ENCODE measurements at regions of chr21 and their contacts with region 1.

Region 1: GRCh38 chr21:36976882-36977651 is 10.6 kb upstream of the HLCS start:
- DNase-seq: peak; percentile 66
- ATAC-seq: peak; percentile 77
- H3K4me3 Mint-ChIP-seq: peak overlapping the region; percentile 34
- H3K27ac Mint-ChIP-seq: peak overlapping the region; percentile 70
- H3K4me1 Mint-ChIP-seq: peaks cover 25% of the 10 kb centered on the region
- H3K27me3 Mint-ChIP-seq: peaks cover 9% of the 10 kb centered on the region

Region 2: DNA sequence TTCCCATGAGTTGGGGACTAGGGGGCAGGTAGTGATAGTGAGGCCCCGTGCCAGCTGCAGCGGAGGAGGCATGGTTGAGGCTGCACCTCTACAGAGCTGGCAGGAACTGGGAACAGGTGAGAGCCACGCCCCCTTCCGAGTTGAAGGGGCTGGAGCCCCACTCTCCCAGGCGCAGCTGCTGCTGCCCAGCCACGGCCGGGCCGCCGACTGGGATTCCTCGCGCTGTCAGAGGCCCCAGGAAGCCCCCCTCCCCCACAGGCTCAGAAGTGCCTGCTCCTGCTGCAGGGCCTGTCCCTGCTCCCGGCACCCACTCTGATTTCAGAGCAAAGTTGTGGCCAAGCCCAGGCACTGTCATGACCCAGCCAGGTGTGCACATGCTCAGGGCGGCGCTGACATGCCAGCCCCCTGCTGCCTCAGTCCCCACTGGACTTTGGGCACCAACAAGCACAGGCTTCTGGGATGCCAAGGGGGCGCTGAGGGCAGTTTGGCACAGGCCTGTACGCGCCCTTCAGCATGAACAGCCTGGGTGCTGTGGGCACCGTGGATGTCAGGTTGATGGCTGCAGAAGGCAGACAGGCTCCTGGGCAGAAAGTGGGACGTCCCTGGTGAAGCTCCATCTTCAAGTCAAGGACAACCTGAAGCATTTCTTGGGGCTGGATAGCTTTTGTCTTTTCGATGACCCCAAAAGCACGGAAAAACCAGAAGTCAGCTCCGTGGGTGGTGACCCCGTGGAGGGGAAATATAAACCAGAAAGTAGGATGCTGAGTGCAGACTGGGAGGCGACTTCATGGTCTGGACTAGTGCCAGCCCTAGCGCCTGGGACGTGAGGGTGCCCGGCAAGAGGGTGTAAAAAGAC is 156.7 kb before region 1 on chr21:
- CTCF ChIA-PET with region 1: no interaction called
- DNase-seq: no peak
- ATAC-seq: no peak
- H3K4me3 Mint-ChIP-seq: no peak overlapping the region
- H3K27ac Mint-ChIP-seq: no peak overlapping the region
- H3K4me1 Mint-ChIP-seq: no peaks in the 10 kb centered on the region
- H3K27me3 Mint-ChIP-seq: no peaks in the 10 kb centered on the region

Region 3: GRCh38 chr21:36966066-36966820 is 10.8 kb before region 1 on chr21 and contains the start of gene HLCS:
- CTCF ChIA-PET with region 1: interaction called, 22 read pairs
- DNase-seq: peak; percentile 83
- ATAC-seq: peak; percentile 90
- H3K4me3 Mint-ChIP-seq: peak within 1 kb of the TSS; percentile 75
- H3K27ac Mint-ChIP-seq: peak within 1 kb of the TSS; percentile 81
- H3K4me1 Mint-ChIP-seq: peaks cover 21% of the 10 kb centered on the region
- H3K27me3 Mint-ChIP-seq: no peaks in the 10 kb centered on the region
- total RNA-seq, gene HLCS: 14.2 to 16.2 TPM

Region 4: GRCh38 chr21:37000381-37000780 is 23.3 kb after region 1 on chr21:
- CTCF ChIA-PET with region 1: interaction called, 11 read pairs
- DNase-seq: no peak
- ATAC-seq: no peak
- H3K4me3 Mint-ChIP-seq: no peak overlapping the region
- H3K27ac Mint-ChIP-seq: no peak overlapping the region
- H3K4me1 Mint-ChIP-seq: peaks cover 8% of the 10 kb centered on the region
- H3K27me3 Mint-ChIP-seq: no peaks in the 10 kb centered on the region

Region 5: GRCh38 chr21:37009740-37010341 is 32.8 kb after region 1 on chr21:
- CTCF ChIA-PET with region 1: interaction called, 20 read pairs
- DNase-seq: peak; percentile 86
- ATAC-seq: peak; percentile 93
- H3K4me3 Mint-ChIP-seq: peak overlapping the region; percentile 65
- H3K27ac Mint-ChIP-seq: no peak overlapping the region
- H3K4me1 Mint-ChIP-seq: peaks cover 26% of the 10 kb centered on the region
- H3K27me3 Mint-ChIP-seq: peaks cover 51% of the 10 kb centered on the region

Measured in activated CD8-positive, alpha-beta memory T cell treated with anti-CD3 and anti-CD28 coated beads, Interleukin-2, amount 10 ng/mL, durations not matched to agents 7 days and 5 days (primary cell).